ENCODE measurements at regions of chr12 and their contacts with region 1.

Region 1: GRCh38 chr12:26126340-26127284 is 1.8 kb upstream of the BHLHE41 start:
- DNase-seq: peak; percentile 87 to 89
- ATAC-seq: peak; percentile 75 to 89 (median 83)
- H3K4me3 ChIP-seq: peak overlapping the region; percentile 46 to 80 (median 65)
- H3K27ac ChIP-seq: peak overlapping the region; percentile 65 to 98 (median 93)
- H3K4me1 ChIP-seq: peaks cover 3 to 48% (median 17%) of the 10 kb centered on the region in 9 donors
- H3K27me3 ChIP-seq: peaks cover 0 to 75% (median 0%) of the 10 kb centered on the region in 7 donors
- CTCF ChIP-seq: peak in 3 of 9 donors; percentile 37 to 39 (median 37)

Region 2: DNA sequence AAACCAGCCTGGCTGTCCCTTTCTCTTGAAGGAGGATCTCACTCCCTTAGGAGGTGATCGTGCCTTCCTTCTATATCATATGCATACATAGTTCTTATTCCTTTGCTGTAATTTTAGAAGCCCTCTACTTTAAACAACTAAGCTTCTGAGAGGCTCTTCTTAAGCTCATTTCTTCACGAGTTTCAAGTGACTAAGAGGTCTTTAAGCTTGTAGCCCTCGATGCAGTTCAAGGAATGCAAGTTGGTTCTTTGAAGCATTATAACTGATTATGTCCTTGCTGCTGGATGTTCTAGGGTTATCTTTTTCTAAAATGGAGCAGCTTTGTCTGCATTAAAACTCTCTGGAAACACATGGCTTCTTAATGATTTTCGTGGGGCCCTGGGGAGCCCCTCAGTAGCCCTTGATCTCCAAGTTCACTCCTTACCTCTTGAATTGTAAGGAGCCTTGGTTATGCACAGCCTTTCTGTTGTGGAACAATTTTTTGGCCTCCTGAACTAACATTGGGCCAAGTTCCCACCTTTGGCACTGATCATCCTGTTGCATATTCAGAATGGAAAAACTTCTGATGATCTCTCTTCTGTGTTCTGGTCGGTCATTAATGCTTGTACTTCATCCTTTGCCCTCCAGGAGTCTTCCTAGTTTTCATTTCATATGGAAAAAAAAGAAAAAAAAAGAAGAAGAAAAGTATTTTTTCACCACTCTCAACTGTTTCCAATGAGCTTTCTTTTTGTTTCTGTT is 155.5 kb before region 1 on chr12:
- intact Hi-C with region 1: no loop called
- DNase-seq: no peak
- ATAC-seq: peak in 3 of 8 donors; percentile 32 to 45 (median 43)
- H3K4me3 ChIP-seq: no peak overlapping the region
- H3K27ac ChIP-seq: no peak overlapping the region
- H3K4me1 ChIP-seq: peaks cover 3 to 67% (median 23%) of the 10 kb centered on the region in 9 donors
- H3K27me3 ChIP-seq: no peaks in the 10 kb centered on the region
- CTCF ChIP-seq: peak in 4 of 9 donors; percentile 14 to 31 (median 20)

Region 3: DNA sequence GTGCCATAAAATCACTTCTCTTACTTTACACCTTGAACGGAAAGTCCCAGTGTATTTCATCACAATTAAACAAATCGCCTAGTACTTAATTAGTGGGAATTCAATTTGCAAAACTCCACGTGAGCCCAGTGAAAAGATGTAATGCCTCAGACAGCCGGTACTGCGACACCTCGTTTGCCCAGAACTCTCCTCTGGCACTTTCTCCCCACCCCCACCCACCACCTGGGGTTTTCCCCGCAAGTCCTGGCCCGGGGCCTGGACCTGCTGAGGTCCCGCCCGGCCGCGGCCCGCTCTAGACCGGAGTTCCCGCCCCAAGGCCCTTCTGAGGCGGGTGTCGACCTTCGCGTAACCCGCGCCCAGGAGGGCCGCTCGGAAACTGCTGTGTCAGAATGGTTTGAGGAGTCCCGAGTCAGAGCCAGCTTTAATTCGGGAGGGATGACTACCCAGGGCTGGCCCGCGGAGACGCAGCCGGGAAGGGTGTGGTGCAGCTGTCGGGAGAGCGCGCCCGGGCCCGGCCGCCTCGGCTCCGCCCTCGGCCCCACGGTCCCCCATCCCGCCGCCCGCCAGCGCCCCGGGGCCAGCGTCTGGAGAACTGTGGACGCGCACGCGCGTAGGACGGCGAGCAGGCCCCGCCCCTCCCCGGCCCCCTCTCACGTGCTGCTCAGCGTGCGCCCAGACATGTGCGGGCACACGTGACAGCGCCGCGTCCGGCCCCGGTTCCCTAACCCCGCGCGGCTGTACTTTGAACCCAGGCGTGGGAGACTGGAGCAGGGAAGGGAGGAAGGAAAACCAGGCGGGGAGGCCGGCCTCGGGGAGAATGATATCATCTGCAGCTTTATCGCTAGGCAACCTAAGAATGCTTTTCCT is 12.5 kb before region 1 on chr12:
- intact Hi-C with region 1: loop called in 1 of 10 experiments (anchors 1 kb)
- DNase-seq: peak; percentile 94 to 96
- ATAC-seq: peak; percentile 90 to 98 (median 93)
- H3K4me3 ChIP-seq: peak overlapping the region; percentile 0 to 59 (median 52)
- H3K27ac ChIP-seq: peak overlapping the region; percentile 79 to 96 (median 93)
- H3K4me1 ChIP-seq: peaks cover 3 to 54% (median 25%) of the 10 kb centered on the region in 9 donors
- H3K27me3 ChIP-seq: peaks cover 0 to 9% (median 0%) of the 10 kb centered on the region in 7 donors
- CTCF ChIP-seq: peak in 6 of 9 donors; percentile 5 to 42 (median 28)

Region 4: GRCh38 chr12:26195641-26196420 is 69.2 kb after region 1 on chr12:
- intact Hi-C with region 1: loop called in 7 of 10 experiments (anchors 2 to 5 kb)
- DNase-seq: peak; percentile 47 to 51
- ATAC-seq: peak; percentile 77 to 91 (median 86)
- H3K4me3 ChIP-seq: peak overlapping the region; percentile 49 to 81 (median 68)
- H3K27ac ChIP-seq: peak overlapping the region; percentile 67 to 95 (median 87)
- H3K4me1 ChIP-seq: peaks cover 0 to 47% (median 26%) of the 10 kb centered on the region in 9 donors
- H3K27me3 ChIP-seq: peaks cover 0 to 31% (median 0%) of the 10 kb centered on the region in 7 donors
- CTCF ChIP-seq: peak in 2 of 9 donors; percentile 10 to 11

Region 5: DNA sequence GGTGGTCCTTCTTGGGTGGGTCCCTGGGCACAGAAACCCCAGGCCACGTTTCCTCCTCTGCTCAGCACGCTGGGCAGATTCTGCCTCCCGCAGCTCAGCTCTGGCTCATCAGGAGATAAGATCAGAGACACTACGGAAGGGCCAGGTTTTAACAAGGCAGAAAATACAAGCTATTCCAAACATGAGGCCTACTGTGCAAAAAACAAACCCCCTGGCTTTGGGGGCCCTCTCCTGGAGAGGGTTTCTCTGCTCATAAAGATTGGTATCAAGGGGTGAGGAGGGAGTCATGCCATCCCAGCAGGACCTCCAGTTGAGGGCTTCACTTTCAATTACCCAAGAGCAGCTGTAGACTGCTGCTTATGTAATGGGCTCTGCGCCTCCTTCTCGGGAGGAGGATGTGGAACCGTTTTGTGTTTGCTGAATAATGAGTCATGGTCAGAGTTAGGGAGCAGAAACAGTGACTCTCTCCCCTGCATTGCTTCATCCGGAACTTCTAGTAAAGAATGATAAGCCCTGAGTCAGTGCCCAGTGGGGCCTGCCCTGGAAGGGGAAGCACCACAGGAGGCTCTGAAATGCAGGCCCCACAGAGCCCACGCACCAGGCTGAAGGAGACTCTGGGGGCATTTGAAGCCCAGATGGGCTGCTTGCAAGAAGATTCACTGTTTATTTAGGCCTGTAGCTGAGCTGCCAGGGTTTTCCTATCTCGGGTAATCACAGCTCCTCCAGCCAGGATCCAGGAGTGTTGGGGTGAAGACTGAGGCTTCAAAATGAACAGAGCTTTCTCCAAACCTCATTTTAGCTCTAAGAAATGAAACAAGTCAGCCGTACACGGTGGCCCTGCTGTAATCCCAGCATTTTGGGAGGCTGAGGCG is 148.1 kb after region 1 on chr12:
- intact Hi-C with region 1: loop called in 5 of 10 experiments (anchors 10 kb)
- DNase-seq: peak; percentile 63 to 87
- ATAC-seq: peak; percentile 93 to 99 (median 95)
- H3K4me3 ChIP-seq: no peak overlapping the region
- H3K27ac ChIP-seq: peak overlapping the region; percentile 25 to 89 (median 80)
- H3K4me1 ChIP-seq: peaks cover 10 to 78% (median 42%) of the 10 kb centered on the region in 9 donors
- H3K27me3 ChIP-seq: no peaks in the 10 kb centered on the region
- CTCF ChIP-seq: no peak

Region 6: DNA sequence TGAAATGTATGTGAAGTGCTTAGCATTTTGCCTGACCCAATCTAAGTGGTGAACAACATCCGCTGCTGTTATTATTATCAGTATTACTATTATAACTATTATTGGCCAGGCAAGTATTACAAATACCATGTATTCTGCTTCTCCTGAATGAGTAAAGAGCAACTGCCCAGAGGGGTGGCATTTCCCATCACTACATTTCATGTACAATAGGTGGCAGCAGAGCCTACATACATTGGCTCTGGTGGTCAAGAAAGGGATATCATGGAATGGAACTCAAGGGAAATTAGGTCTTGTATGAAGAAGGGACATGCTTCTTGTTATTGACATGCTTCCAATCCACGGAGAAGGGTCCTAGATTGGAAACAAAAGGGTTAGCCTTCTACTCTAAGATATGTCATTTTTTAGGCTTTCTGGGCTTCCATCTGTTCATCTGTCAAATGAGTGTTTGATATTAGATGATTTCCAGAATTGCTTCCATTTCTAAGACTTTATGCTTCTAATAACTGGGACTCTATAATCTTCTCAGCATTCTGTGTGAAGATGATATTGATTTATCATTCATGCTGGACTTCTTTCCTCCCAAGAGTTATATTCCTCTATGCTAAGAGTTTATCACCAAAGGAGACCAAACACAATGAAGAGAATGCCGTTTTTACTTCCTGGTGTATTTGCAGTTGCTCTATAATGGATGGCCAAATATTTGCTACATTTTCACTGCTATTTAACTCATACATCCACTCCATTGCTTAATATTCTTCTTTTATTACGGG is 307.9 kb after region 1 on chr12:
- intact Hi-C with region 1: loop called in 1 of 10 experiments (anchors 10 kb)
- DNase-seq: no peak
- ATAC-seq: peak in 5 of 8 donors; percentile 55 to 70 (median 56)
- H3K4me3 ChIP-seq: no peak overlapping the region
- H3K27ac ChIP-seq: no peak overlapping the region
- H3K4me1 ChIP-seq: no peaks in the 10 kb centered on the region
- H3K27me3 ChIP-seq: no peaks in the 10 kb centered on the region
- CTCF ChIP-seq: peak; percentile 16 to 75 (median 69)